Naive thymus-derived CD4-positive, alpha-beta T cell (primary cell): ENCODE measurements at regions of chr17 and their contacts with region 1.

Region 1: DNA sequence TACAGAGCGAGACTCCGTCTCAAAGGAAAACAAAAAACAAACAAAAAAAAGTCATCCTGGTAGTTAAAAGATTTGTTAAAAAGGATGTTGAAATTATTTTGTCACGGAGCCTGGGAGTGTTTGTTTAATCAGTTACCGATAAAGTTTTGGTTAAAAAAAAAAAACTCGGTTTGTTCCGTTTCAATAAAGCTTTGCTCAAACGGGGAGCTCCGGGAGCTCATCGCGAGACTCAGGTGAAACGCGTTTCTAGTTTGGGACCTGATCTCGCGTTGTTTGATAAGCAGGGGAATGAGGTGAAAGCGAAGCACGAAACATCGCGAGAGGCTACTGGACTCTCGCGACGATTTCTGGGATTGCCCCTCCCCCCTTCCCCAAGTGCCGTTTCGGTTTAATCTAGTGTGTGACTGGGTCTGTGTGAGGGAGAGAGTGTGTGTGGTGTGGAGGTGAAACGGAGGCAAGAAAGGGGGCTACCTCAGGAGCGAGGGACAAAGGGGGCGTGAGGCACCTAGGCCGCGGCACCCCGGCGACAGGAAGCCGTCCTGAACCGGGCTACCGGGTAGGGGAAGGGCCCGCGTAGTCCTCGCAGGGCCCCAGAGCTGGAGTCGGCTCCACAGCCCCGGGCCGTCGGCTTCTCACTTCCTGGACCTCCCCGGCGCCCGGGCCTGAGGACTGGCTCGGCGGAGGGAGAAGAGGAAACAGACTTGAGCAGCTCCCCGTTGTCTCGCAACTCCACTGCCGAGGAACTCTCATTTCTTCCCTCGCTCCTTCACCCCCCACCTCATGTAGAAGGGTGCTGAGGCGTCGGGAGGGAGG is at the start of gene CDK12:
- DNase-seq: peak; percentile 76 to 98 (median 95)
- ATAC-seq: peak; percentile 91
- H3K4me3 ChIP-seq: peak within 1 kb of the TSS; percentile 73
- H3K4me3 Mint-ChIP-seq: peak within 1 kb of the TSS; percentile 93 to 100 (median 98)
- H3K27ac ChIP-seq: peak within 1 kb of the TSS; percentile 89
- H3K27ac Mint-ChIP-seq: peak within 1 kb of the TSS; percentile 89 to 99 (median 97)
- H3K4me1 ChIP-seq: peaks cover 8 to 13% of the 10 kb centered on the region in 2 donors
- H3K4me1 Mint-ChIP-seq: peaks cover 27 to 51% (median 41%) of the 10 kb centered on the region in 7 donors
- H3K27me3 ChIP-seq: no peaks in the 10 kb centered on the region
- H3K27me3 Mint-ChIP-seq: no peaks in the 10 kb centered on the region
- total RNA-seq, gene CDK12: 94.9 to 118 (median 112) TPM

Region 2: DNA sequence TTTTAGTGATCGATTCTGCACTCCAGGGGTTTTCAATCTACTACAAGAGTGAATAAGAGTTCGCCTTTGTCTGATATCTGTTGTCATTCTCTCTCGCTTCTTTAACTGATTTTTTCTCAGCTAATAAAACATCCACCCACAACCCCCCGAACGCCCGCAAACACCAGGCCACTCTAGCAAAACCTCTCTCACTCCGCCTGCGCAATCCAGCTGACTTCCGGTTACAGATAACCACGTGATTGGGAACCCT is 261.6 kb before region 1 on chr17:
- CTCF ChIA-PET with region 1: no interaction called
- POLR2A ChIA-PET with region 1: interaction called, 5 read pairs
- intact Hi-C with region 1: loop called (anchors 1 kb)
- DNase-seq: peak in 7 of 9 donors; percentile 61 to 93 (median 89)
- ATAC-seq: peak; percentile 85
- H3K4me3 ChIP-seq: peak overlapping the region; percentile 83
- H3K4me3 Mint-ChIP-seq: peak overlapping the region; percentile 87 to 98 (median 92)
- H3K27ac ChIP-seq: peak overlapping the region; percentile 98
- H3K27ac Mint-ChIP-seq: peak overlapping the region; percentile 93 to 100 (median 99)
- H3K4me1 ChIP-seq: peaks cover 42 to 46% of the 10 kb centered on the region in 2 donors
- H3K4me1 Mint-ChIP-seq: peaks cover 38 to 72% (median 54%) of the 10 kb centered on the region in 7 donors
- H3K27me3 ChIP-seq: no peaks in the 10 kb centered on the region
- H3K27me3 Mint-ChIP-seq: no peaks in the 10 kb centered on the region

Region 3: DNA sequence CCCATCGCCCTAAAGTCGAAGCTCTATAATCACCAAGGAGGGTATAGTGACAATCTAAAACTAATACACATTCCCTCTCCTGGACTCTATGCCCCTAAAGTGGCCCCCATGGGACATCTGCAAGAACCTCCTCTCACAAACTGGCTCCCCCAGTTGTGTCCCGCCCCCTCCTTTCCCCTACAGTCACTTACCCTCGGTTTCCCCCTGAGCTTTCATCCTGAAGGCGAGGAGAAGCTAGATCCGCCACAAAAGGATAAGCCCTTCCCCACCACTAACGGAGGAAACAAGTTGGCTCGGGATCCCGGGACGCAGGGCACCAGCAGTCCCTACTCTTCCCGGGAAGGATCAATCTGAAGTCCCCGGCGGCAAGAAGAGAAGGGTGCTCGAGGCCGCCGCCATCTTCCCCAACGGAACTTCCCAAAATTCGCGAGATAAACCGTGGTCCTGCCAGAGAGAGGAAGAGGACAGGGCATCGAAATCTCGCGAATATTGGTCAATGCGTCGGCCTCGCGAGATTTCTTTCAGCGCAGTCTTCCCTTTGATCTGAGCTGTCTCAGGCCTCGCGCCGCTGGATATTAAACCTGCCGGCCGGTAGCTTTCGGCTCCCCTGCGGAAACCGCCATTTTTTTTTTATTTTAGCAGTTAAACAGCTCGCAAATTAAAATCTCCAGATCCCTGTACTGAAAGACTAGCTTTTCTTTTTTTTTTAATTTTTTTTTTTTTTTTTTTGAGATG is 10.3 kb before region 1 on chr17 and contains the start of gene MED1:
- CTCF ChIA-PET with region 1: interaction called, 3 read pairs
- POLR2A ChIA-PET with region 1: interaction called, 143 read pairs
- intact Hi-C with region 1: loop called (anchors 1 kb)
- DNase-seq: peak; percentile 77 to 94 (median 89)
- ATAC-seq: peak; percentile 95
- H3K4me3 ChIP-seq: peak within 1 kb of the TSS; percentile 98
- H3K4me3 Mint-ChIP-seq: peak within 1 kb of the TSS; percentile 92 to 98 (median 96)
- H3K27ac ChIP-seq: peak within 1 kb of the TSS; percentile 85
- H3K27ac Mint-ChIP-seq: peak within 1 kb of the TSS; percentile 96 to 100 (median 99)
- H3K4me1 ChIP-seq: peaks cover 8 to 12% of the 10 kb centered on the region in 2 donors
- H3K4me1 Mint-ChIP-seq: peaks cover 7 to 38% (median 29%) of the 10 kb centered on the region in 7 donors
- H3K27me3 ChIP-seq: no peaks in the 10 kb centered on the region
- H3K27me3 Mint-ChIP-seq: no peaks in the 10 kb centered on the region
- total RNA-seq, gene MED1: 37.3 to 61.5 (median 56.0) TPM

Region 4: GRCh38 chr17:39636927-39637736 is 175.8 kb after region 1 on chr17 and contains the start of gene STARD3:
- CTCF ChIA-PET with region 1: no interaction called
- POLR2A ChIA-PET with region 1: no interaction called
- intact Hi-C with region 1: loop called in 1 of 2 experiments (anchors 5 kb)
- DNase-seq: peak; percentile 80 to 92 (median 86)
- ATAC-seq: peak; percentile 95
- H3K4me3 ChIP-seq: peak within 1 kb of the TSS; percentile 86
- H3K4me3 Mint-ChIP-seq: peak within 1 kb of the TSS; percentile 89 to 98 (median 95)
- H3K27ac ChIP-seq: peak within 1 kb of the TSS; percentile 92
- H3K27ac Mint-ChIP-seq: peak within 1 kb of the TSS; percentile 76 to 97 (median 92)
- H3K4me1 ChIP-seq: peaks cover 43 to 49% of the 10 kb centered on the region in 2 donors
- H3K4me1 Mint-ChIP-seq: peaks cover 40 to 71% (median 60%) of the 10 kb centered on the region in 7 donors
- H3K27me3 ChIP-seq: no peaks in the 10 kb centered on the region
- H3K27me3 Mint-ChIP-seq: peaks cover 0 to under 1% (median 0%) of the 10 kb centered on the region in 5 donors
- total RNA-seq, gene STARD3: 69.8 to 143 (median 99.3) TPM